ENCODE measurements at regions of chr5 and their contacts with region 1.

Region 1: DNA sequence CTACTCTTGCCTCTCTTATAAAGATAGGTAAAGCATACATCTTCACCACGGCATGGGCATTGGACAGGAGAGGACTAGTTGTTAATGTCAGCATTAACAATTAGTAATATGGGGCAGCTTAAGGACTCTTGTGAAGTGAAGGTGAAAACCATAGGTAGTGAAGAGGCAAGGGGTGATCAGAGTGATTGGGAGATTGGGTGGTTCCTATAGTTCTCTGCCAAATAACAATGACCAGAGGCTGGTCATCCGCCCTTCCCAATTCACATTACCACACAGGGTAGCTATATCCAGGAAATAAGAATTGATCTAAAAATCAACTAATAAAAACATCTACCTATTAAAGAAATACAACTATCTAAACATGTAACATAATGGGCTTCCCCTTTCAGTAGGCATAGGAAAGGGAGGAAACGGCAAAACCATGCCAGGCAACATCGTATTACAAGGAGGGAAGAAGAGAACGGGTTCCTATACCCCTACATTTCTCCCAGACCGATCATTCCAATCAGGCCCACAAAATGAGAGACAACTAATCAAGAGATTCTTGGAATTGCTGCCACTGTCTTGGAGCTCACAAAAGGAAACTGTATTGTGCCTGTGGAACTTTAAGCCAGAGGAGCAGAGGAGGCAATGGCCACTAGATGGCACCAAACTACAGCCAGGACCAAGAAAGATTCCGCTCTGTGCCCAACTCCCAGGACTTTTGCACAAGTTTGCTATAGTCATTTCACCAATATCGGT is 121.6 kb downstream of the FBXL17 start:
- DNase-seq: peak; percentile 73
- ATAC-seq: peak; percentile 86
- H3K4me3 Mint-ChIP-seq: peak overlapping the region; percentile 41
- H3K27ac Mint-ChIP-seq: no peak overlapping the region
- H3K4me1 Mint-ChIP-seq: peaks cover 1% of the 10 kb centered on the region
- H3K27me3 Mint-ChIP-seq: no peaks in the 10 kb centered on the region

Region 2: GRCh38 chr5:108271127-108271526 is 10.8 kb after region 1 on chr5:
- CTCF ChIA-PET with region 1: interaction called, 15 read pairs
- POLR2A ChIA-PET with region 1: no interaction called
- DNase-seq: no peak
- ATAC-seq: no peak
- H3K4me3 Mint-ChIP-seq: no peak overlapping the region
- H3K27ac Mint-ChIP-seq: no peak overlapping the region
- H3K4me1 Mint-ChIP-seq: no peaks in the 10 kb centered on the region
- H3K27me3 Mint-ChIP-seq: no peaks in the 10 kb centered on the region

Region 3: DNA sequence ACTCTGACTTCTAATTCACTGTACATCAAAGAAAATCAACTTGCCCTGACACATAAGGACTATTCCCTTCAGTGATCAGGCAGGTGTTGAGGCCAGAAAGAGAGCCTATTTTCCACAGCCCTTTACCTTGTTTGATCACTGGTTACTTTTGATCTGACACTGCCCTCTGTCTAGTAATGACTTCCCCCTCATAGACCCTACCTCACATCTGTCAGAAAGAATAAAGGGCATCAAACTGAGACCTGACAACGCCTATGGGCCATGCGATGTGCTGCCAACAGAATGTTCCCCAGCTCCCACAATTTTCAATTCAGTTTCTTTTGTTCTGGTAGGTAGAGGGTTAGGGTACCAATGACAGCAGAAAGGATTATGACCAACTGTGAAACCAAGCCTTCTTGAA is 73.9 kb after region 1 on chr5:
- CTCF ChIA-PET with region 1: interaction called, 11 read pairs
- POLR2A ChIA-PET with region 1: no interaction called
- DNase-seq: no peak
- ATAC-seq: no peak
- H3K4me3 Mint-ChIP-seq: no peak overlapping the region
- H3K27ac Mint-ChIP-seq: no peak overlapping the region
- H3K4me1 Mint-ChIP-seq: no peaks in the 10 kb centered on the region
- H3K27me3 Mint-ChIP-seq: no peaks in the 10 kb centered on the region

Region 4: GRCh38 chr5:108345541-108346171 is 85.4 kb after region 1 on chr5:
- CTCF ChIA-PET with region 1: interaction called, 39 read pairs
- POLR2A ChIA-PET with region 1: interaction called, 3 read pairs
- DNase-seq: no peak
- ATAC-seq: peak; percentile 51
- H3K4me3 Mint-ChIP-seq: no peak overlapping the region
- H3K27ac Mint-ChIP-seq: no peak overlapping the region
- H3K4me1 Mint-ChIP-seq: no peaks in the 10 kb centered on the region
- H3K27me3 Mint-ChIP-seq: no peaks in the 10 kb centered on the region

Region 5: GRCh38 chr5:108418197-108418596 is 157.9 kb after region 1 on chr5:
- CTCF ChIA-PET with region 1: no interaction called
- POLR2A ChIA-PET with region 1: no interaction called
- DNase-seq: no peak
- ATAC-seq: no peak
- H3K4me3 Mint-ChIP-seq: no peak overlapping the region
- H3K27ac Mint-ChIP-seq: no peak overlapping the region
- H3K4me1 Mint-ChIP-seq: no peaks in the 10 kb centered on the region
- H3K27me3 Mint-ChIP-seq: no peaks in the 10 kb centered on the region